ENCODE measurements at regions of chr12 and their contacts with region 1.

Region 1: DNA sequence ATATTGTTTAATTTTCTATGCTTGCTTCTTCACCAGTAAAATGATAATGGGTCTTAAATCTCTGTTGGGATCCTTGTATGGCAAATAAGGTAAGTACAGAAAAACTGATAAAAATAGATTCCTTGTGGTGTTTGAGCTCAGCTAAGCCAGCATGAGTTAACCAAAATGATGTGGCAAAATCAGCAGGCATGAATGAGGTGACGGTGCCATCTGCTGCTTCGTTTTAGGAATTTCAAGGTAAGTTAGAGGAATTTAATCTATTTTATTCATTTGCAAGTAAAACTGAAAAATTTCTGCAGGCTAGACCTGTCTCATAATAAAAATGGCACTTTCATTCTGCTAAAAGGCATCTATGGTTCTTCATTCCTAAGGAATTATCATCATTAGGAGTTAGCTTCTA is 10.0 kb upstream of the CLEC7A start:
- DNase-seq: peak; percentile 70
- ATAC-seq: peak; percentile 67
- H3K4me3 ChIP-seq: no peak overlapping the region
- H3K27ac ChIP-seq: no peak overlapping the region
- H3K4me1 ChIP-seq: peaks cover 2% of the 10 kb centered on the region; the same call in 1 of the 2 replicates
- H3K27me3 ChIP-seq: no peaks in the 10 kb centered on the region
- CTCF ChIP-seq: peak; percentile 82
- POLR2A ChIP-seq: no peak
- RAD21 ChIP-seq: peak; percentile 86

Region 2: DNA sequence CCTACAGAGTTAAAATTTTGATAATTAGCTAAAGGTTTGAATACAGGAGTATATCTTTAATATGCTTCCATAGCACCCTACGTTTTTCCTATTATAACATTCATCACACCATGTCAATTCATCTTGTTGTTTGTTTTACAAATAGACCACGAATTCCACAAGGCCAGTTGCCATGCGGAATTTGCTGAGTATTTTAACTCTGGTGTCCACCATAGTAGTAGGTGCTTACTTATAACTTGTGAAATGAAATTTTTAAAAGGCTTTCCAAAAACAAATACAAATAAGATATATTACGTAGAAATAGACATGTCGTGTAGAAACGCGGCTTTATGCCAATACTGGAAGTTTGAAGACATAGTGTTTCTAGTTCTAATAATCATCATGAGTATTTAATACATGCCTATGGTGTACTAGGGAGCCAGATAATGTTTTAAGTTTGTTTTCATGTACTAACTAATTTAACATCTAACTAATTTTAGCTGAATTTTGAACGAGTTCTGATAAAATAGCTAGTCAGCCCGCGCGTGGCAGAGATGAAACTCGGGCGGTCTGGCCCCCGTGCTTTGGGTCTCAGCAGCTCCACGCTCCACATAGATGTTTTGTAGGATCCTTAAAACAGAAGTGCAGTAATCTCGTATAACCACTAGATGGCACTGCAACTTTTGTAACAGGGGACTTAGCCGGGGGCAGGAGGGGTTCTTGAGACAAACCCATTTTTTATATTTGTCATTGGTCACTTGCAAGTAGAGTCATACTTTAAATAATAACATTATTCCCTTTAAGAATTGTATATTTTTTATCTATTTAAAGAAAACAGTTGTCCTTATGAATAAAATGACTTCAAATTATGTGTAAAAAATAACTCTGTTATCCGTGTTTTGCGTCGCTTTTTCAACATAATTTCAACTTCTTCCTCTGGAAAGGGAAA is 389.5 kb before region 1 on chr12:
- CTCF ChIA-PET with region 1: interaction called, 14 read pairs
- POLR2A ChIA-PET with region 1: no interaction called
- dilution Hi-C with region 1: no loop called
- in situ Hi-C with region 1: no loop called
- intact Hi-C with region 1: loop called (anchors 1 kb)
- DNase-seq: peak; percentile 56
- ATAC-seq: peak; percentile 88
- H3K4me3 ChIP-seq: no peak overlapping the region
- H3K27ac ChIP-seq: no peak overlapping the region
- H3K4me1 ChIP-seq: no peaks in the 10 kb centered on the region
- H3K27me3 ChIP-seq: peaks cover 3% of the 10 kb centered on the region; the same call in 1 of the 2 replicates
- CTCF ChIP-seq: peak; percentile 73
- POLR2A ChIP-seq: no peak
- RAD21 ChIP-seq: peak; percentile 71

Region 3: DNA sequence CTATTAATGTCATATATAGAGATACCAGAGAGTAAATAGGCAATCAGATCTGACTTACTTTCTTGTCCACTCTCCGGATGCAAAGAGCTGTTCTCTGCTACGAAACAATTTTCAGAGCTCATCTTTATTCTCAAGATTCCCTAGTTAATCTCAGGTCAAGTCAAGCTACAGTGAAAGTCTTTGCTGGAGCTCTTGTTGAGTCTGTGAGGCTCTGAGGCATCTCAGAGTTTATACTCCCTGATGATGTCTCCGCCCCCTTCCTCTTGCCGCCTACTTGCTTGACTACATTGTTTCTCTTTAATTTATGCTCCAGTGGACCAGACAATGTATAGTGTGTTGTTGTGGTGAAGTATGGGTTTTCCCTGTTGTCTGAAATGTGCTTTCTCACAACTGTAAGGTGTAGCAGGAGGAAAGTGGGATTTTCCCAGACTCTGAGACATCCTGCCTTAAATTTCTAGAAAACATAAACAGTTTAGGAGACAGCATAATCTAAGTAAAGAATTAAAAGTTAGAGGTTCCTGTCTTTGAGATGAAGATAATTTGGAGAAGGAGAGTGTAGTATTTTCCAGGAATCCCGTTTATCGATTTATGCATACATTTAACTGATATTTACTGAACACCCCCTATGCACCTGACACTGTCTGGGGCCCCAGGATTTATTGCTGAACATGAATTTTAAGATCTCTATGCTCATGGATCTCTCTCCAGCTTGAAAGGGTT is 379.1 kb before region 1 on chr12 and contains the start of gene CD69:
- CTCF ChIA-PET with region 1: no interaction called
- POLR2A ChIA-PET with region 1: no interaction called
- dilution Hi-C with region 1: no loop called
- in situ Hi-C with region 1: no loop called
- intact Hi-C with region 1: no loop called
- DNase-seq: no peak
- ATAC-seq: peak; percentile 46; the same call in 1 of the 2 replicates
- H3K4me3 ChIP-seq: no peak within 1 kb of the TSS
- H3K27ac ChIP-seq: no peak within 1 kb of the TSS
- H3K4me1 ChIP-seq: no peaks in the 10 kb centered on the region
- H3K27me3 ChIP-seq: no peaks in the 10 kb centered on the region
- CTCF ChIP-seq: no peak
- POLR2A ChIP-seq: no peak
- RAD21 ChIP-seq: no peak
- total RNA-seq, gene CD69: not detected in 2 replicates

Region 4: GRCh38 chr12:9829990-9830389 is 310.0 kb before region 1 on chr12:
- CTCF ChIA-PET with region 1: no interaction called
- POLR2A ChIA-PET with region 1: interaction called, 17 read pairs
- dilution Hi-C with region 1: no loop called
- in situ Hi-C with region 1: no loop called
- intact Hi-C with region 1: no loop called
- DNase-seq: no peak
- ATAC-seq: no peak
- H3K4me3 ChIP-seq: no peak overlapping the region
- H3K27ac ChIP-seq: no peak overlapping the region
- H3K4me1 ChIP-seq: no peaks in the 10 kb centered on the region
- H3K27me3 ChIP-seq: no peaks in the 10 kb centered on the region
- CTCF ChIP-seq: no peak
- POLR2A ChIP-seq: no peak
- RAD21 ChIP-seq: no peak

Region 5: GRCh38 chr12:9940375-9940774 is 199.6 kb before region 1 on chr12:
- CTCF ChIA-PET with region 1: interaction called, 5 read pairs
- POLR2A ChIA-PET with region 1: no interaction called
- dilution Hi-C with region 1: no loop called
- in situ Hi-C with region 1: no loop called
- intact Hi-C with region 1: loop called (anchors 5 kb)
- DNase-seq: peak; percentile 5
- ATAC-seq: no peak
- H3K4me3 ChIP-seq: no peak overlapping the region
- H3K27ac ChIP-seq: no peak overlapping the region
- H3K4me1 ChIP-seq: no peaks in the 10 kb centered on the region
- H3K27me3 ChIP-seq: peaks cover 9% of the 10 kb centered on the region
- CTCF ChIP-seq: peak; percentile 42
- POLR2A ChIP-seq: no peak
- RAD21 ChIP-seq: 0 out of 2 replicates have a peak, but pooled peaks have one; percentile 6

Region 6: DNA sequence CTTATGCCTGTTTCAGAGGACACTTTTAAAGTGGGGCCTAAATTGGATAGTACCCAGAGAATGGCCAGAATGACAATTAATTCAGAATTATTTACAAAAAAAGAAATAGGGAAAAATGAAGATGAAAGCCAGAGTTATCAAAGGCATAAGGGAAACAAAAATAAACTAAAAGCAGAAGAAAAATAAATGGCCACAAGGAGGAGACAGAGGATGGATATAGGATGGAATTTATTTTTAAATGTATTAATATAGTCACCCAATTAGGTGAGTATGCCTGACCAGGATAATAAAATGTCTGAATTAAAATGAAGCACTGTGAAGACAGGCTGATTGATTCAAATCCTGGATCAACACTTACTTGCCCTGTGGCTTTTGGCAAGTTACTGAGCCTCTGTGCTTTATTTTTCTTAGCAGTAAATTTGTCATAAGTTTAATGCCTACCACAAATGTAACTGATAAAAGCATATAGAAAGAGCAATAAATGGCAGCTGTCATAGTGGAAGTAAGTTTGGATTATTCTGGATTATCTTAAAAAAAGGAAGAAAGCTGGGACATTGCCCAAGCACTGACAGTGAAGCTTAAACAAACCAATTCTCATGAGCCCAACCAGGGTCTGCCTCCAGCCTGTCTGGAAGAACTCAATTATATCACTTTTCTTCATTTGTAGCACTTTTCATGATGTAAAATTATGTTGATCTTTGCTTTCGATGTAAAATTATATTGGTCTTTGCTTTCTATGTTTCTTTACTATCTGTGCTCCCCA is 106.0 kb before region 1 on chr12:
- CTCF ChIA-PET with region 1: interaction called, 8 read pairs
- POLR2A ChIA-PET with region 1: no interaction called
- dilution Hi-C with region 1: no loop called
- in situ Hi-C with region 1: no loop called
- intact Hi-C with region 1: loop called (anchors 1 kb)
- DNase-seq: peak; percentile 18
- ATAC-seq: peak; percentile 50
- H3K4me3 ChIP-seq: no peak overlapping the region
- H3K27ac ChIP-seq: no peak overlapping the region
- H3K4me1 ChIP-seq: no peaks in the 10 kb centered on the region
- H3K27me3 ChIP-seq: no peaks in the 10 kb centered on the region
- CTCF ChIP-seq: peak; percentile 72
- POLR2A ChIP-seq: no peak
- RAD21 ChIP-seq: peak; percentile 72

Region 7: GRCh38 chr12:10276774-10277173 is 136.8 kb after region 1 on chr12:
- CTCF ChIA-PET with region 1: no interaction called
- POLR2A ChIA-PET with region 1: no interaction called
- dilution Hi-C with region 1: no loop called
- in situ Hi-C with region 1: no loop called
- intact Hi-C with region 1: no loop called
- DNase-seq: no peak
- ATAC-seq: no peak
- H3K4me3 ChIP-seq: no peak overlapping the region
- H3K27ac ChIP-seq: no peak overlapping the region
- H3K4me1 ChIP-seq: no peaks in the 10 kb centered on the region
- H3K27me3 ChIP-seq: 0 out of 2 replicates have a peak, but pooled peaks cover 2% of the 10 kb centered on the region
- CTCF ChIP-seq: no peak
- POLR2A ChIP-seq: no peak
- RAD21 ChIP-seq: no peak